ENCODE measurements at regions of chr1 and their contacts with region 1.

Region 1: GRCh38 chr1:93909146-93910050 is at the start of gene GCLM:
- DNase-seq: peak; percentile 95
- ATAC-seq: peak; percentile 92
- H3K4me3 Mint-ChIP-seq: peak within 1 kb of the TSS; percentile 89
- H3K27ac Mint-ChIP-seq: peak within 1 kb of the TSS; percentile 87
- H3K4me1 Mint-ChIP-seq: peaks cover 25% of the 10 kb centered on the region
- H3K27me3 Mint-ChIP-seq: no peaks in the 10 kb centered on the region
- CTCF ChIP-seq: peak; percentile 48
- total RNA-seq, gene GCLM: 8.6 and 9.6 TPM in 2 replicates

Region 2: DNA sequence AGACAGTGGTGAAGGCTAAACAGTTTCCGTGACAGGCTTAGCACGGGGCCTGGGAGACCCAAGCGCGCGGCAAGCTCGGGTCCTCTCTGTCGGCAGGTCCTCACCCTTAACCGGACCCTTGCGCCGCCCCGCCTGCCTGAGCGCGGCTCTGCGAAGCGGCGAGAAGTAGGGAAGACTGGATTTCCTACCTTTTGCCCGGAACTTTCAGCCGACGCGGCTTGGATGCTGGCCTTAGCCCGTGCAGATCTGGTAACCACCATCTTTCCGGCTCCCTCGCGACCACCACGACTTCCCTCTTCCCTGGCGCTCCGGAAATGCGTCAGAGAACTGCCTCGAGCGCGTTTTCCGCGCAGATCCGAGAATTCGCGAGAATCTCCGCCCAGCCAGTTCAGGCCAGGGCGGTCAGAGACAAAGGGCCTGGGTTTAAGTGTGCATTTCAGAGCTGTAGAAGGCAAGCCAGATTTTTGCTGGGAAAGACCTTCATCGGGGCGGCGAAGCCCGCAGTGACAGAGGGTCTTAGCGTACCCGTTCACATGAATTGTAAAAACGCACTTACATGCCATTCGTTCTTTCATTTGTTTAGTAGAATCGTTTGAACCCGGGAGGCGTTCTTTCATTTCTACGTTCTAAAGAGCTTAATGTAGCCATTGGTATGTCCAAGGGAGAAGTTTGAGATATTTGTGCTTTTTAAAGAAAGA is 30.4 kb before region 1 on chr1 and contains the start of gene DNTTIP2:
- CTCF ChIA-PET with region 1: interaction called, 8 read pairs
- POLR2A ChIA-PET with region 1: interaction called, 25 read pairs
- intact Hi-C with region 1: loop called (anchors 1 kb)
- DNase-seq: peak; percentile 77
- ATAC-seq: peak; percentile 91
- H3K4me3 Mint-ChIP-seq: peak within 1 kb of the TSS; percentile 96
- H3K27ac Mint-ChIP-seq: peak within 1 kb of the TSS; percentile 97
- H3K4me1 Mint-ChIP-seq: peaks cover 48% of the 10 kb centered on the region
- H3K27me3 Mint-ChIP-seq: no peaks in the 10 kb centered on the region
- CTCF ChIP-seq: no peak
- total RNA-seq, gene DNTTIP2: 65.6 and 69.7 TPM in 2 replicates

Region 3: DNA sequence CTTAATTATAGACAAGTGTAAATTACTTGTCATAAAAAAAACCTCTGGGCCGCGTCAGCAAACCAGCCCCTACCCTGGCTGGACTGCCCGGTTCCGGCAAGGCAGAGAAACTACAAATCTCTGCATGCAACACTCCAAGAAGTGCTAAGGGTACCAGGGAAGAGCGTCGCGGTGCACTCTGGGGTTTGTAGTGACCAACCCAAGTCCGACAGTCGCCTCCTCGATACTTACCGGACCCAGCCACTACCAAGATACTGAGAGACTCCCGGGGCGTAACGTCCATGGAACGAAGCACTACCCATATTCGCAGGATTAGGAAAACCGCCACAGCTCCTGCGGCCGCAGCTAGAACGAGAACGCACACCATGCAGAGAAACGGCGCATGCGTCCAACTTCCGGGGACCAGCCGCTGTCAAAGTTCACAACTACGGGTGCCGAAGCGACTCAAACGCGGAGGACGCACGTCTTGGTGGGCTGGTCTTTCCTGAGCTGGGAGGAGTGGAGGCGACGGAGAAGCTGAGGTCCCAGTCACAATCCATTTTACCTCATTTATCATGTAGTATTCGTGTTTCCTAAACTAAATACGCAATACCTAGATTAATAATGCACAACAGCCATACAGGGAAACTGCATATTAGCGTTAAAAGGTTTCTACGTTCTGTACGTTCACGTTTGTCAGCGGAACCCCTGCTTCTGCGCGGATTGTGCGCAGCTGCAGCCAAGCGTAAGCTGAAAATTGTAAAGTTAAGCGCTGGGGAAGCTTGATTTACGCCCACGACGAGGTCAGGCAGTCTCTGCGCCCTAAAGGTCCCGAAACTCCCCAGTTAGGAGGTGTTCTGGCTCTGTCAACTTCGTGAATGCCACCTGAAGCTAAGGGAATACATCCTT is 1163.4 kb after region 1 on chr1 and contains the start of gene ALG14:
- CTCF ChIA-PET with region 1: no interaction called
- POLR2A ChIA-PET with region 1: no interaction called
- intact Hi-C with region 1: loop called (anchors 2 kb)
- DNase-seq: peak; percentile 88
- ATAC-seq: peak; percentile 96
- H3K4me3 Mint-ChIP-seq: peak within 1 kb of the TSS; percentile 100
- H3K27ac Mint-ChIP-seq: peak within 1 kb of the TSS; percentile 99
- H3K4me1 Mint-ChIP-seq: peaks cover 20% of the 10 kb centered on the region
- H3K27me3 Mint-ChIP-seq: peaks cover 3% of the 10 kb centered on the region
- CTCF ChIP-seq: no peak
- total RNA-seq, gene ALG14: 3.7 and 7.5 TPM in 2 replicates

Measured in activated B cell treated with CpG ODN at 0.5 μM for 24 hours (primary cell).